Activated CD4-positive, alpha-beta T cell treated with anti-CD3 and anti-CD28 coated beads, Interleukin-2, amount 10 ng/mL, durations not matched to agents 7 days and 5 days (primary cell): ENCODE measurements at regions of chr12 and their contacts with region 1.

Region 1: GRCh38 chr12:57836442-57837375 is 9.8 kb downstream of the CTDSP2 start:
- DNase-seq: peak; percentile 58
- H3K4me3 Mint-ChIP-seq: peak overlapping the region; percentile 51
- H3K27ac Mint-ChIP-seq: peak overlapping the region; percentile 84
- H3K4me1 Mint-ChIP-seq: peaks cover 90% of the 10 kb centered on the region
- H3K27me3 Mint-ChIP-seq: no peaks in the 10 kb centered on the region

Region 2: DNA sequence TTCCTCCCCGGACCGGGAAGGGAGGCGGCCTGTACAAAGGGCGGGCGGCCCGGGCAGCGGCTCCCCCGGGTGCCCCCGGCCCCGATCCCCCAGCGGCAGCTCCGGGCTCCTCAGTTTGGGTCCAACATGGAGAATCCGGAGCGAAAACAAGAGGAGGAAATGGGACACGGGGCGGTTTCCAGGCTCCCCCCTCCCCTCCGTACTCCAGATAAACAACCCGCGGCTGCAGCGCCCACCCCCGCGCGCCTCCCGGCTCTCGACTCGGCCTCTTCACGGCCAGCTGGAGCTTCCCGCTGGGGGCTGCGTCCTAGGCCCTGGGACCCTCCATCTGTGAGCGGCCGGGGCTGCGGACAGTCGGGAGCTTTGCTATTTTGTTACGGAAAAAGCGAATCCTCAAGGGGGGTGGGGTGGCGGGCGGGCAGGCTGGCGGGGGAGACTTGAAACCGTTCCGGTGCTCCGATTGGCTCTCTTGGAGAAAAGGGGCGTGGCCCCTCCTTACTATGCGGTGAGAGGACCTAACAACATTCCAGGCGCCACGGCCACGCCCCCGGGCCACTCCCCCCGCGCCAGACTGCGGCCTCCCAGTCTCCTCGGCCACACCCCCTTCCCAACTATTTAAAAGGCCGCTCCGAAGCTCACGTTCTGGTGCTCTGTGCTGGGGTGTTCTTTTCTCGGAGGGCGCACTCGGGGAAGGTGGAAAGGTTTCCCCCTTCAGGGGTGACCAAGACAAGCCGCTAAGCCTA is 10.0 kb after region 1 on chr12 and contains the start of gene CTDSP2:
- CTCF ChIA-PET with region 1: interaction called, 10 read pairs
- POLR2A ChIA-PET with region 1: interaction called, 4 read pairs
- DNase-seq: peak; percentile 89
- H3K4me3 Mint-ChIP-seq: peak within 1 kb of the TSS; percentile 82
- H3K27ac Mint-ChIP-seq: peak within 1 kb of the TSS; percentile 81
- H3K4me1 Mint-ChIP-seq: peaks cover 53% of the 10 kb centered on the region
- H3K27me3 Mint-ChIP-seq: peaks cover 25% of the 10 kb centered on the region
- total RNA-seq, gene CTDSP2: 144 to 156 TPM

Region 3: DNA sequence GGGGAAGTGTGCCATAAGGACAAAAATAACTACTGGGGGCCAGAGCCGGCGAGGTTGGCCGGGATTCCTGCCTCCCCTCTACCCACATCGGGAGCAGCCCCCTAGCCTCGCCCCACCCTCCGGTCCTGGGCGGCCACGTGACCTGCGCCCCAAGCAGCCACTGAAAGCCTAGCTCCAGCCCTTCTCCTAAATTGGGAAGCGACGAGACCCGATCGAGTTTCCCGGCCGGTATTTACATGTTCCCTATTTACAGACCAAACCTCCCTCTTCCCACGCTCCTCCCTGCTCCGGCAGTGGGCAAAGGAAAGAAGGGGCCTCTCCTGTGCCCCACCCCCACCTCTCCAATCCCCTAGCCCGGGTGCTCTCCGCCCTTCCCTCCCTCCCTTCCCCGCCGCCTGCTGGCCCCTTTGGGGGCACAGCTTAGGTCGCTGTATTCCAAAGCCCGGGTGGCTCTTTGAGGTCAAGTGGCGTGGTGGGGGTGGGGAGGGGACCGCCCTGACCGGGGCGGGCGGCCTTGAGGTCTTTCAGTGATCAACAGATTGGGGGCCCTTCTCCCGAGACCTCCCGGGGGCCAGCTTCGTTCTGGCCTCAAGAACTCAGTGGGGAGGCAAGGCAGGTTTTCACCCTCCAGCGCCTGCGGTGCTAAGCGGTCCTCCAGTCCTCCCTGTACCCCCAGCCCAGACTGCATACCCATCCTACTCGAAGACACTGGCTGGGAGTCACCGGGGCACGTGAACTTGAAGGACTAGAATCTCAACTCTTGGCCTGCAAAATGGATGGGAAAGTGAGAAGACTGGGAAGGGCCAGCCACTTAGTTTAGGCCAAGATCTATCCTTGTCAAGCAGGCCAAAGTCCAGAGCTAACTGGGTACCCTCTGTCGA is 16.2 kb after region 1 on chr12:
- CTCF ChIA-PET with region 1: interaction called, 14 read pairs
- POLR2A ChIA-PET with region 1: interaction called, 4 read pairs
- DNase-seq: no peak
- H3K4me3 Mint-ChIP-seq: no peak overlapping the region
- H3K27ac Mint-ChIP-seq: no peak overlapping the region
- H3K4me1 Mint-ChIP-seq: peaks cover 26% of the 10 kb centered on the region
- H3K27me3 Mint-ChIP-seq: peaks cover 55% of the 10 kb centered on the region